Activated T-helper 1 cell treated with anti-CD3 and anti-CD28 coated beads, Interleukin-12 subunit alpha, Interleukin-12 subunit beta, Interleukin-2, Interleukin-4 antibody, amounts not matched to agents 30 ng/mL and 10 ng/mL and 1 ng/mL, durations not matched to agents 14 hours and 24 hours and 36 hours (primary cell): ENCODE measurements at regions of chr9 and their contacts with region 1.

Region 1: GRCh38 chr9:112037281-112038016 is 137.6 kb downstream of the SUSD1 start:
- DNase-seq: peak; percentile 74
- H3K4me3 Mint-ChIP-seq: peak overlapping the region; percentile 43
- H3K27ac Mint-ChIP-seq: peak overlapping the region; percentile 82
- H3K4me1 Mint-ChIP-seq: peaks cover 53% of the 10 kb centered on the region
- H3K27me3 Mint-ChIP-seq: peaks cover 16% of the 10 kb centered on the region

Region 2: DNA sequence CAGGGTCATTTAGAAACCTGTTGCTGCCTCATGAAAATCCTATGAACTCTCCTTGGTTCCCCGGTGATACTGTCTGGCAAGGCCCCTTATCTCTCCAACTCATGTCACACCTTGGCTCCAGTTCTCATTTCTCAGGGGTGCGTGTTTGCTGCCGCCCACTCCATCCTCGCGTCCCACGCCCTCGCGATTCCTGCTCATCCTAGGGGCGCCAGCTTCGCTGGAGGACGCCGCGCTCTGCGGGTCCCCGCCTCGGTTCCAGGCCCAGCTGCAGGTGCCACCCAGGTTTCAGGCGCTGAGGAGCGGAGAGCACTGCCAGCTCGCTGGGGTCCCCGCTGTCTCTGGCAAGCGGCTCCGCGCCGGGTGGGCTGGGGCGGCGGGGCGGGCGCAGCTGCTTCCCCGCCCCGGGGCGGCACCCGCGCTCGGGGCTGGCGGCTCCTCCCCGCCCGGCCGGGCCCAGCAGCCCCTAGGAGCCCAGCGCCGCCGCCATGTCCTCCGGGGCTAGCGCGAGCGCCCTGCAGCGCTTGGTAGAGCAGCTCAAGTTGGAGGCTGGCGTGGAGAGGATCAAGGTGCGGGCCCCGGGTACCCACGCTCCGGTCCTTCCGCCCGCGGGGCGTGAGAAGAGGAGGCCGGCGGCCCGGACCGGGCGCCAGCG is 376.2 kb before region 1 on chr9 and contains the start of gene GNG10:
- intact Hi-C with region 1: loop called (anchors 1 kb)
- DNase-seq: peak; percentile 66
- H3K4me3 Mint-ChIP-seq: peak within 1 kb of the TSS; percentile 89
- H3K27ac Mint-ChIP-seq: peak within 1 kb of the TSS; percentile 89
- H3K4me1 Mint-ChIP-seq: peaks cover 34% of the 10 kb centered on the region
- H3K27me3 Mint-ChIP-seq: no peaks in the 10 kb centered on the region
- total RNA-seq, gene GNG10: 30.7 and 35.4 TPM in 2 replicates

Region 3: GRCh38 chr9:111937781-111938426 is 99.5 kb before region 1 on chr9:
- intact Hi-C with region 1: loop called (anchors 1 kb)
- DNase-seq: peak; percentile 28
- H3K4me3 Mint-ChIP-seq: peak overlapping the region; percentile 63
- H3K27ac Mint-ChIP-seq: peak overlapping the region; percentile 88
- H3K4me1 Mint-ChIP-seq: peaks cover 31% of the 10 kb centered on the region
- H3K27me3 Mint-ChIP-seq: no peaks in the 10 kb centered on the region

Region 4: DNA sequence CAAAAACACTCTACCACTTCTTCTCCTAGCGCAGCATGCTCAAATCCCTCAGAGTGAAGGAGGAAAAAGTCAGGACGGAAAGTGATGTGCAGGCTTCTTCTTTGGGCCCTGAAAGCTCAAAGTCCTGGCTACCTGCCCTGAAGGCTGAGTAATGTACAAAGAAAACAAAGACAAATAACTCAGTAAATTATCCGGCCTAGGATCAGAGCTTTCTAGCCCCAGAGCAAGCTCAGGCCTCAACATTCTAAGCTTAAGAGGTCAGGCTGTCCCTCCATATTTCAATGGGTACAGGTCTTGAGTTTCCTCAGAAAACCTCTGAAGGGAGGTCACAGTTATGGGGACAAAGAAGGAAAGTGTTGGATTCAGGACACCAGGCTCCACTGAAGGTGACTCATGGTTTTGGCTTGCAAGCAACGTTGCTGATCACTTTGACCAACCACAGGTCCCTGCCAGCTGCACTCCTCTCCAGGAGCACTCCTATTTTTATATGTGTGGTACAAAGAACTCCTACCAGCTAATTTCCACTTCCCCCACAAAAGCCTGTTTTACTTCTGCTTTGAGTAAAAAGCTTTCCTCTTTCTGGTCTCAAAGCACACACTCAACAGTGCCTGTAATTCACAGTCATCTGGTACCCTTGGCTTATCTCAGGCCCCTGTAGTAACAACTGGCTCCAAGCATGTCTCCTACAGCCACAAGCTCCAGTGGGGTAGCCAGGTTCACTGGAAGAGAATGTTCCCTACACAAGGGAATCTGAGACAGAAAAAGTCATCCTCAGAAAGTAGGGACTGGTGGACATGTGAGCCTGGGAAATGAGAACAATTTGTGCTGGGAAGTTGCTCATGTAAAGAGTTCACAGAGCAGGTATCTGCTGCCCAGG is 25.2 kb before region 1 on chr9:
- intact Hi-C with region 1: loop called (anchors 1 kb)
- DNase-seq: no peak
- H3K4me3 Mint-ChIP-seq: no peak overlapping the region
- H3K27ac Mint-ChIP-seq: no peak overlapping the region
- H3K4me1 Mint-ChIP-seq: peaks cover 21% of the 10 kb centered on the region
- H3K27me3 Mint-ChIP-seq: peaks cover 50% of the 10 kb centered on the region

Region 5: DNA sequence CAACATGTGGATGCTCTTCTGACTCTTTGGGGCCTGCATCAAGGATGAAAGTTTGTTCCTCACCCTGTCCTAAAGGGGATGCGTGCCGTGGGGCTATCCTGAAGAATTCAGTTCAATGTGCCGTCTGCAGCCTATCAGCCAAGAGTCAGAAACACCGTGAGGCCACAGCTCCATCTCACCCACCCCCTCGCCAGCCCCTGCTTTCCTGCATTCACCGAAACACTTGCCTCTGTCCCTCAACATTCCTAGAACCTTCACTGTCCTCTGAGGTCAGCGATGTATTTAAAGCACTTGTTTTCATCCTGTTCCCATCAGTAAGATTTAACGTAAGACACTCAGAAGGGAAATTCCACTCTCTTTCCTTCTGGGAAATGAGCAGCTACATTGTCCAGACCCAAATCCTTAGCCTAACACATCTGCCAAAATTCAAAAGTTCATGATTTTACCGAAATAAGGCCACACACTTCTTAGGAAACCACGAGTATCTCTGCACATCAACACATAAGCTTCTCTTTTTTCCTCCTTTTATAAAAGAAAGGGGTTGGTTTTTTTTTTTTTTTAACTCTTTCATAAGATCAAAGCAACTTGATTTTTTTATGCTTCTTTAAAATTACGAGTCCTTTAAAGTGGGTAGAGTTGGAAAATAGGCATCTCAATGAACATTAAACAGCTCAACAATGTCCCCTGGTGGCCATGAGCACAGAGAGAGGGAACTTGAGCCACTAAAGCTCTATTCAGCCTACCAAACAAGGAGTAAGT is 37.0 kb after region 1 on chr9:
- intact Hi-C with region 1: loop called (anchors 1 kb)
- DNase-seq: peak; percentile 35
- H3K4me3 Mint-ChIP-seq: no peak overlapping the region
- H3K27ac Mint-ChIP-seq: no peak overlapping the region
- H3K4me1 Mint-ChIP-seq: peaks cover 36% of the 10 kb centered on the region
- H3K27me3 Mint-ChIP-seq: no peaks in the 10 kb centered on the region

Region 6: DNA sequence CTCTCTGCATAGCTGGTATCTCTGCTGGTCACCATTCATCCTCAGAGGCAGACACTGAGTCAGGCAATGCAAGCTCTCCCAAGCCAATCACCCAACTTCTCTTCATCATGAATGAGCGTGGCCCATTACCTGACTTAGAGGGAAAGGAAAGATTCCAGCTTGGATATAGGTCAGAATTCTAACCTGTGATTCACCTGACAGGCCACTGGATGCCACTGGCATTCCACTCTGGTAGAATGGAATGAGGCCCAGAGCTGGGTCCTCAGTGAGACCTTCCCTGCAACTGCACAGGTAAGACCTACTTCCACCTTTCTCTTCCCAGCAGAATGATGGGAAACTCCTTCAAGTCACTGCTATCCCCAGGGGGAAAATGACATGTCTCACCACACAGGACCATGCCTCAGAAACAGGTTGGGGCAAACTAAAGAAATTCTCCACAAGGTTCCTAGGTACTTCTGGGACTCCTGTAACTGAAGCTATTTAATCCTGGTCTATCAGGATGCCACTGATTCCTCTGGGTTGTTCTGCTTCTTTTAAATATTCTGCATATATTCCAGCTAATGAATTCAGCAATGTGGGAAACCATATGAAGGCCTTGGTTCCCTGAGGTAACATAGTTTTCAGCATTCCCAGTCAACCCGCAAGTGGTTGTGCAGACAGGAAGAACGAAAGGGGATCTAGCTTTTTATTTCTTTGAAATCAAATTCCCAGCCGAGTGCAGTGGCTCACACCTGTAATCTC is 75.7 kb after region 1 on chr9:
- intact Hi-C with region 1: no loop called
- DNase-seq: no peak
- H3K4me3 Mint-ChIP-seq: no peak overlapping the region
- H3K27ac Mint-ChIP-seq: no peak overlapping the region
- H3K4me1 Mint-ChIP-seq: no peaks in the 10 kb centered on the region
- H3K27me3 Mint-ChIP-seq: no peaks in the 10 kb centered on the region

Region 7: DNA sequence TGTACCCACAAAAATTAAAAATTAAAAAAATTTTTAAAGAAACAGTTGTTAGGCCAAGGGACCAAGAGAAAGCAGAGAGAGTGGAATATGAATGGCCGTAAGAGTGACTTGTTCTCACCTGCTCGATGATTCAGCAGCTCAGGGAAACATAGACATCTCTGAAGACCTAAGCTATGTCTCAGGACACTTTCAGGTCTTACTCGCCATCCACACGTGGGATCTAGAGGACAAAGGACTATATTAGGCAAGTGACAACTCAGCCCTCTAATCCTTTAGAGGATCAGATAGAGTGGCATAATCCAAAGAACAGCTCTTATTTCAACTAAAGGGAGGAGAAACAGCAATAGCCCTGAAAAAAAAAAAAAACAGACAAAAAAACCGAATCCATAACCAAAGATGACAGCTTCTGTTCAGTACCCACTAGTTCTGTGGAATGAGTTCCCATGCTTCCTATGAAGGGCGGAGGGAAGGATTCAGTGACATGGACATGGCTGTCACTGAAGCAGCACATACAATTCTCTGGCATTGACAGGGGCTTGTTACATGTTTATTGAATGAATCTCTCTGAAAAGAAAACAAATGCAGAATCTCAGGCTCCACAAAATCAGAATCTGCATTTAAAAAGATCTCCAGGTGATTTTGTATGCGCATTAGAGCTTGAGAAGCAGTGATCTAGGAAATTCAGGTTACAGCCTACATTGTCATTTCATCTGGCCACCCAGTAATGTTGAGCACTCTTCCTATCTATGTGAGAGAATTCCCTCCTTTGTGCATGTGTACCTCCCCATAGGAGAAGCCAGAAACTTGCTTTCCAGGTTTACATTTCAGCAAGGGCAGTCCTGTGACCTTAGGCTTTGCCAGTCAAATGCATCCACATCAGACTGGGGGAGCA is 545.2 kb after region 1 on chr9:
- intact Hi-C with region 1: no loop called
- DNase-seq: no peak
- H3K4me3 Mint-ChIP-seq: no peak overlapping the region
- H3K27ac Mint-ChIP-seq: no peak overlapping the region
- H3K4me1 Mint-ChIP-seq: no peaks in the 10 kb centered on the region
- H3K27me3 Mint-ChIP-seq: no peaks in the 10 kb centered on the region